Aorta (tissue), 5 donors: ENCODE measurements at regions of chr5 and their contacts with region 1.

Region 1: DNA sequence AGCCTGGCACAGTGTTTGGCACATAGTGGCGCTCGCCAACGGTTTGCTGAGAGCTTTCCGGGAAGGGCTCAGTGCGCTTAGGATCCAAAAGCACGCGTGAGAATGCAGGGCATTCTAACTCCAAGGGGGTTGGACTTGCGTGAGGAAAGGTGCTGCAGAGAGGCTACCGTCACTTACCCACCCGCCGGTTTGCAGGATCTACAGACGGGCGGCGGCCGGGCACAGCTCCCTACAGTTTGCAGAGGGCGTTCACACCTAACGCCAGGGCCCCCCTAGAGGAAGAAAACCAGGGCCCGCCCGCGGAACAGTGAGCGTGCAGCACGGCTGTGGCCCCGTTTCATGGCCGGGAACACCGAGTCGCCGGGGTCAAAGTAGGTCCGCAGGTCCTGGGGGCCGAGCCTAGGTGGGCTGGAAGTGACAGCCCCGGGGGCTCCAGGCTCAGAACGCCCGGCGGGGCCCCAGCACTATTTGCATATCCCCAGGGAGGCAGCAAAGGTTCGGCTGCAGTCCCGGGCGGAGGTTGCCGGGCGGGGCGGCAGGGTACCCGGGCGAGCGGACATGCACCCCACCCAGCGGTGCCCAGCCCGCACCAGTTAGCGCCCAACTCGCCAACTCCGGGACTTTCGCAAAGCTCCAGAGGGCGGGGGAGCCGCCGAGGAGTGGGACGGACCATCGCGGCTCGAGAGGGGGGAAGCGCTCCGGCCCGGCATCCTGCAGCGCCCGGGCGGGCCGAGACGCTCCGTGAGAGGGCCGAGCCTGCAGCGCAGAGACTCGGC is 526 bp upstream of the GALNT10 start:
- DNase-seq: peak; percentile 94
- ATAC-seq: peak; percentile 93
- H3K4me3 ChIP-seq: peak overlapping the region; percentile 53 to 69
- H3K27ac ChIP-seq: peak overlapping the region in 1 of 2 donors; percentile 58
- H3K4me1 ChIP-seq: peaks cover 0 to 3% of the 10 kb centered on the region in 2 donors
- H3K27me3 ChIP-seq: no peaks in the 10 kb centered on the region

Region 2: DNA sequence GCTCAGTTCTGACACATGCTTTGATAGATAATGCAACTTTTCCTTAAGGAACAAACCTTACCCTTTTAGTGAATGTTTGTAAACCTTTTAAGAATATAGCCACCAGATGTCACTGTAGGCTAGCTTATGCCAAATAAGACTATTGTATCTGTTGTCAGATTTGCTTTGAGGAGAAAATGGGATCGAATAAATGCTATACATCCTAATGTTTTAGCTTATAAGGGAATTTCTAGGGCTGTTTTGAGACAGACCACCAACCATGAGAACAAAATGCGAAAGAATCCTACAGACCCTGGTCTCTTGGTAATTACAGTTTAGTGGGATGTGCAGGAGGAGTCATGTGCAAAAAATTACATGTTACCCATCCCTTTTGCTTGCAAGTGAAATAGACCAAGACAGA is 1657.3 kb before region 1 on chr5:
- intact Hi-C with region 1: loop called in 1 of 2 experiments (anchors 10 kb)
- DNase-seq: no peak
- ATAC-seq: no peak
- H3K4me3 ChIP-seq: no peak overlapping the region
- H3K27ac ChIP-seq: no peak overlapping the region
- H3K4me1 ChIP-seq: no peaks in the 10 kb centered on the region
- H3K27me3 ChIP-seq: no peaks in the 10 kb centered on the region

Region 3: DNA sequence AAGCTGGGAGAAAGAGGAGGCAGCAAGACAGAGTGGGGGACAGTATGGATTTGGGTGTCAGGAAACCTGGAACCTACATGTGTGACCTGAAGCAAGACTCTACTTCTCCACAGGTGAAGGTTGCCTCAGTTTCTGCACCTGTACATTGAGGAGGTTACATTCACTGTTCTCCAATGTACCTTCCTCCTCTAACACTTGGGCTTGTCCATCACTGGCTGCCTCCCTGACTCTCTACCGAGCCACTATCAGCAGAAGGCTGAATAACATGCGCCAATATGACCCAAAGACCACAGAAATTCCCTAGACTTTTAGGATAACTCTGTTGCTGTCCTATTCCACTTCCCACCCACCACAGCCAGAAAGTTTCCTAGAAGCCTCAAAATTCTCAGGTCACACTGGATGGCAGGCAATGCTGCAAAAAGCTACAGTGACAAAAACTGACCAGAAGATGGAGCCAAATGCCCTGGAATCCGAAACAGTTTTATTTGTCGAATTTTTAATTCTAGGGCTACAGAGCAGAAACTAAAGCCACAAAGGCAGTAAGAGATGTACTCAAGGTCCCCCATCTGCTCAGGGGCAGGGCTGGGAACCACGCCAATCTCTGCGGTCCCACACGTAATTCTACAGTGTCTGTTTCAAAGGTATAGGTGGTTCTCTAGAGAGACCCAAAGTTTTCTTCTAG is 215.7 kb before region 1 on chr5:
- intact Hi-C with region 1: loop called in 1 of 2 experiments (anchors 10 kb)
- DNase-seq: no peak
- ATAC-seq: no peak
- H3K4me3 ChIP-seq: no peak overlapping the region
- H3K27ac ChIP-seq: no peak overlapping the region
- H3K4me1 ChIP-seq: no peaks in the 10 kb centered on the region
- H3K27me3 ChIP-seq: no peaks in the 10 kb centered on the region

Region 4: DNA sequence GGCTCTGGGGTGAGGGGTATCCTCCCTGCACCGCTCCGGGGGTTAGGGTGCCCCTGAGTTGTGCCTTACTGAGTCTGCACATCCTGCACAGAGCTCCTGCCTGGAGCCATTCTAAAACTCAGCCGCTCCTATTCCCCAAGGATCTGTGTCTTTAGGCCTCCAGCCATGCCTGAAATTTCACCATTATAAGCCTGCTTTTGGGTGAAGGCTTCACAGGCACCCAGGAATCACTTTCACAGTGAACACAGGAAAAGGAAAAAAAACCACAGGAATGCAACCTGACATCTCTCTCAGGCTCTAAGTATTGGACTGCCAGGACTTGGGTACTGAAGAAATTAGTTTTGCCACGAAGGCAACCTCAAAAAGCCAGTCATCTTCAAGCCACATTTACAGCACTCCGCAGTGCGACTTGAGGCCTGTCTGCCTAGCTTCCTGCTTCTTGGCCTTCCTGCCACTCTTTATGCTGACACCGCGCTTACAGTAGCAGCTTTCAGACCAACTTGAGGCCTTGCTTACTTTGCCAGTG is 31.4 kb after region 1 on chr5:
- intact Hi-C with region 1: loop called in 1 of 2 experiments (anchors 2 kb)
- DNase-seq: peak in 1 of 2 donors; percentile 82
- ATAC-seq: peak; percentile 70
- H3K4me3 ChIP-seq: no peak overlapping the region
- H3K27ac ChIP-seq: peak overlapping the region in 1 of 2 donors; percentile 81
- H3K4me1 ChIP-seq: peaks cover 1 to 4% of the 10 kb centered on the region in 2 donors
- H3K27me3 ChIP-seq: no peaks in the 10 kb centered on the region

Region 5: DNA sequence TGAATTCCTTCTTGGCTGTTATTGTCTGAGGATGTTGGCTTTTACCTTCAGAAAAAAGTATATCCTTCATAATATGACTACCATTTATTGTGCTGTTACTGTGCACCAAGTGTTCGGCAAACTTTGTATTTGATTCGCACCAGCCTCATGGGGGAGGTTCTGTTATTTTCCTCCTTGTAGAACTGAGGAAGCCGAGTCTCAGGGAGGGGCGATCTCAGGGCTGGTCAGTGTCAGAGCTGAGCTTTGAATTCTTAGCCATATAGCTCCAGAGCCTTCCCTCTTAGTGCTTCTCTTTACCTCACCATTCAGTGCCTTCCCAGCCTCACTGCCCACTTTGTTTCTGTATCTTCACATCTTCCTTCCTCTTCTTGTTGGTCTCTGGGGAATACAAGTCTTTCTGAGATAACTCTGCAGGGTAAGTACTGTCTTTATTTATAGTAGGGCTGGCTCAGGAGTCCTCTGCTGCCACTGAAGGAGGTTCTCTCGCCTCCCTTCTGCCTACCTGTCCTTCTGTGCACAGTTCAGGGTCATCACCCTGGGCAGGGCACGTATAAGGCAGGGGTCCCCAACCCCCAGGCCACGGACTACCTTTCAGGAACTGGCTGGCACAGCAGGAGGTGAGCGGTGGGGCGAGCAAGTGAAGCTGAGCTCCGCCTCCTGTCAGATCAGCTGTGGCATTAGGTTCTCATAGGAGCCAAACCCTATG is 48.9 kb after region 1 on chr5:
- intact Hi-C with region 1: no loop called
- DNase-seq: no peak
- ATAC-seq: no peak
- H3K4me3 ChIP-seq: no peak overlapping the region
- H3K27ac ChIP-seq: no peak overlapping the region
- H3K4me1 ChIP-seq: no peaks in the 10 kb centered on the region
- H3K27me3 ChIP-seq: no peaks in the 10 kb centered on the region

Region 6: DNA sequence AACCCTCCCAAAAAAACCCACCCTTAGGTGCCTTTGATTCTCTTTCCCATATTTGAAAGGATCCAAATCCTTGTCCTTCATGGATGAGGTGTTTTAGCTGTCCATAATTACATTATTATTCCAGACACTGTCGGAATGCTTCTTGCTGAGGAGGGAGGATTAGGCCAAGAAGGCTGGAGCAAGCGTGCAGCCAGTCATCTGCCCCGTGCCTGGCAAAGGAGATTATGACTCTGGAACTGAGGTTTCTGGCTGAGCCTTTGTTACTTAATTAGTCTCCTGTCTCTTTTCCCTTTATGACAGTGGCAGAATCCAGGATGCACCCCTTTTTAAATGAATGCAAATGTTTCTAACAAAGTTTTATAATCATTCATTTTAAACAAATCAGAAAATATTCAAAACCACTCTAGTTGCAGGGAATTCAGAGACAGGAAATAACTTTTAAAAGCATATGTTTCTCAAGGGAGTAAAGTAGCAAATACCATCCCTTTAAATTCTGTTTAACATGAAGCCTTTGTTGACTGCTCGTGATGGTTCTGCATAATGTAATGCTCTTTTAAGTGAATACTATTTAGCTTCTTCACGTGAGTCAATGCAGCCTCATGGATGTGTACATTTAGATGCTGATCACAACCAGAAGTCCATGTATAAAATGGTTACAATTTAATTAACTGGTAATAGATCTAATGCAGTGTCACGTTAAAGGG is 70.4 kb after region 1 on chr5:
- intact Hi-C with region 1: no loop called
- DNase-seq: no peak
- ATAC-seq: no peak
- H3K4me3 ChIP-seq: no peak overlapping the region
- H3K27ac ChIP-seq: no peak overlapping the region
- H3K4me1 ChIP-seq: no peaks in the 10 kb centered on the region
- H3K27me3 ChIP-seq: no peaks in the 10 kb centered on the region

Region 7: DNA sequence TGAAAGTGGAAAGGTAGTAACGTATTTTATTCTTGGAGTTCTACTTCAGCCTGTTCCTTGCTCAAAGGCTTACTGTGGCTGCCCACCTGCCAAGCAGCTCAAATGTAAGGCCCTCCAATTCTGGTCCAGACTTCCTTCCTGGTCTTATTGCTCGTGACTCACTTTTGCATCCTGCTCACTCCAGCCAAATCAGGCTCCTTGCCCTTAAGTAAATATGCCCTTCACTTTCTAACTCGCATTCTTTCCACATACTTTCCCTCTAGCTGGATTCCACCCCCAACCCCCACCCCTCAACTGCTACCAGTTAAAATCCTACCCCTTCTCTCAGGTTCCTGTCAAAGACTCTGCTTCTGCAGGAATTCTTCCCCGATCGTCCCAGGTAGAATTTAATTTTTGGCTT is 97.1 kb after region 1 on chr5:
- intact Hi-C with region 1: loop called (anchors 5 to 10 kb)
- DNase-seq: peak in 1 of 2 donors; percentile 49
- ATAC-seq: peak; percentile 75
- H3K4me3 ChIP-seq: no peak overlapping the region
- H3K27ac ChIP-seq: peak overlapping the region in 1 of 2 donors; percentile 62
- H3K4me1 ChIP-seq: peaks cover 0 to 4% of the 10 kb centered on the region in 2 donors
- H3K27me3 ChIP-seq: no peaks in the 10 kb centered on the region

Region 8: GRCh38 chr5:154368041-154368800 is 178.2 kb after region 1 on chr5:
- intact Hi-C with region 1: loop called in 1 of 2 experiments (anchors 5 kb)
- DNase-seq: no peak
- ATAC-seq: peak; percentile 77
- H3K4me3 ChIP-seq: no peak overlapping the region
- H3K27ac ChIP-seq: peak overlapping the region; percentile 18 to 46
- H3K4me1 ChIP-seq: peaks cover 5 to 6% of the 10 kb centered on the region in 2 donors
- H3K27me3 ChIP-seq: no peaks in the 10 kb centered on the region

Region 9: DNA sequence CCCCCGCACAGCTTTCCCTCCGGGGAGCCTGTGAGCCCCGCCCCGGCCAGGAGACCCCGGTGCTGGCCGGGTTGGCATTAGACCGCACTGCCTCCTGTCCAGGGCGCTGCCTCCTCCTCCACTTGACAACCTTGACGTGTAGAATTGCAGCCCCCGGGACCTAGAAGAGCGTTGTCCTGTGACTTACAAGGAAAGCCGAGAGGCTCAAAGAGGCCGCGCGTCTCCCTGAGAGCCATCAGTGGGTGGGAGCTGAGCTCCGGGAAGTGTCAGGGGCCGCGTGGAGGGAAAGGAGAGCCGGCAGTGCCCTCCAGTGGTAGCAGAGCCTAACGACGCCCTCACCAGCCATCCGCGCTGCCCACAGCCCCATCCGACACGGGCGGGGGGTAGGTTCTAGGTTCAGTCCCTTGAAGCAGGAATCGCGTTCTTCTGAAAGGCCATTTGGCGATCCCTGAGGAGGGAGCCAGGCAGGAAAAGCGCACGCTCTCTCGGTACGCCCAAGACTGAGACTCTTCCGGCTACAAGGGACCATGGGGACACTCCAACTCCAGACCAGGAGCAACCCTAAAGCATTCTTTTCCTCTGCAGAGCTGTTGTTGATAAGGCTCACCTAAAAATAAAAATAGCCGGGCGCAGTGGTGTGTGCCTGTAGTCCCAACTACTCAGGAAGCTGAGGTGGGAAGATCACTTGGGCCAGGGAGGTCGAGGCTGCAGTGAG is 215.2 kb after region 1 on chr5:
- intact Hi-C with region 1: loop called (anchors 2 kb)
- DNase-seq: peak; percentile 88 to 94
- ATAC-seq: peak; percentile 95
- H3K4me3 ChIP-seq: peak overlapping the region in 1 of 2 donors; percentile 8
- H3K27ac ChIP-seq: no peak overlapping the region
- H3K4me1 ChIP-seq: no peaks in the 10 kb centered on the region
- H3K27me3 ChIP-seq: no peaks in the 10 kb centered on the region